Calu3 (cell line): ENCODE measurements at regions of chr6 and their contacts with region 1.

Region 1: DNA sequence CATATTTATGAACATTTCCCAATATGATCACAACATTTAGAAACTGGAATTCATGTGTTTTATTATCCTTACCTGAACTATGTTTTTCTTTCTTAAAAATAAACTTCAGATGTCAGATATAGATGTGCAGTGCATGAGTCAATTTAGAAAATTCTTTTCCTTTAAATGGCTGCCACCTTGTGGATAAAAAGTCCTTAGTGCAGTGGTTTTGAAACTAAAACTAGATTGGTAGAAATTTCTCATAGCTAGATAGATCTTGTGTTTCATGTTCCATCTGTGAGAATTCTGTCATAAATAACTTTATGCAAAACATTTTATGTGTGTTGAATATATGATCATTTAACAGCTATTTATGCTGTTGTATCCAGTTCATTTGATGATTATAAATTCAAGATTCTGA is 134.9 kb downstream of the KLHL32 start:
- DNase-seq: no peak
- H3K4me3 Mint-ChIP-seq: no peak overlapping the region
- H3K27ac Mint-ChIP-seq: no peak overlapping the region
- H3K4me1 Mint-ChIP-seq: no peaks in the 10 kb centered on the region
- H3K27me3 Mint-ChIP-seq: peaks cover 51% of the 10 kb centered on the region
- CTCF ChIP-seq: no peak

Region 2: GRCh38 chr6:95364016-95364604 is 1695.4 kb before region 1 on chr6:
- CTCF ChIA-PET with region 1: no interaction called
- intact Hi-C with region 1: loop called (anchors 5 kb)
- DNase-seq: no peak
- H3K4me3 Mint-ChIP-seq: no peak overlapping the region
- H3K27ac Mint-ChIP-seq: no peak overlapping the region
- H3K4me1 Mint-ChIP-seq: peaks cover 8% of the 10 kb centered on the region
- H3K27me3 Mint-ChIP-seq: no peaks in the 10 kb centered on the region
- CTCF ChIP-seq: no peak

Region 3: GRCh38 chr6:96391776-96392360 is 667.6 kb before region 1 on chr6:
- CTCF ChIA-PET with region 1: no interaction called
- intact Hi-C with region 1: loop called (anchors 5 kb)
- DNase-seq: peak; percentile 34
- H3K4me3 Mint-ChIP-seq: no peak overlapping the region
- H3K27ac Mint-ChIP-seq: no peak overlapping the region
- H3K4me1 Mint-ChIP-seq: peaks cover 9% of the 10 kb centered on the region
- H3K27me3 Mint-ChIP-seq: no peaks in the 10 kb centered on the region
- CTCF ChIP-seq: no peak

Region 4: GRCh38 chr6:96542702-96543101 is 516.8 kb before region 1 on chr6:
- CTCF ChIA-PET with region 1: no interaction called
- intact Hi-C with region 1: loop called (anchors 2 kb)
- DNase-seq: no peak
- H3K4me3 Mint-ChIP-seq: no peak overlapping the region
- H3K27ac Mint-ChIP-seq: no peak overlapping the region
- H3K4me1 Mint-ChIP-seq: no peaks in the 10 kb centered on the region
- H3K27me3 Mint-ChIP-seq: no peaks in the 10 kb centered on the region
- CTCF ChIP-seq: peak; percentile 19

Region 5: GRCh38 chr6:96626759-96627364 is 432.6 kb before region 1 on chr6:
- CTCF ChIA-PET with region 1: interaction called, 5 read pairs
- intact Hi-C with region 1: loop called (anchors 1 kb)
- DNase-seq: no peak
- H3K4me3 Mint-ChIP-seq: no peak overlapping the region
- H3K27ac Mint-ChIP-seq: no peak overlapping the region
- H3K4me1 Mint-ChIP-seq: no peaks in the 10 kb centered on the region
- H3K27me3 Mint-ChIP-seq: no peaks in the 10 kb centered on the region
- CTCF ChIP-seq: no peak

Region 6: DNA sequence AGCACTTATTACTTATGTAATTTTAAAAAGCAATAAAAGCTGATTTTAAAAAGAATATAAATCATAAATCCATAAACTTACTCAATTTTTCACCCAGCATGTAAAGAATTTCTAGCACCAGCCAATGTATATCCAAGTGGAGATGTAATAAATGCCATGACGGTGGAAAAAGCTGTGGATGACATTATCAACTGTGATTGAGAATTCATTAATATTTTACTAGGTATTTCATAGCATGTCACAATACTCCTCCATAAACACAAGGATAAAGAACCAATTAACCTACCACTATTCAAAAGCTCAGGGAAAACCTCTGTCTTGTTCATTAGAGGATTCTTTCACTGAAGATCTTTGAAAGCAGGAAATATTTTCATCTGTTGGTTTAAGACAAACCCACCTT is 210.3 kb after region 1 on chr6:
- CTCF ChIA-PET with region 1: no interaction called
- intact Hi-C with region 1: no loop called
- DNase-seq: no peak
- H3K4me3 Mint-ChIP-seq: no peak overlapping the region
- H3K27ac Mint-ChIP-seq: no peak overlapping the region
- H3K4me1 Mint-ChIP-seq: no peaks in the 10 kb centered on the region
- H3K27me3 Mint-ChIP-seq: no peaks in the 10 kb centered on the region
- CTCF ChIP-seq: no peak